ENCODE measurements at regions of chr16 and their contacts with region 1.

Region 1: DNA sequence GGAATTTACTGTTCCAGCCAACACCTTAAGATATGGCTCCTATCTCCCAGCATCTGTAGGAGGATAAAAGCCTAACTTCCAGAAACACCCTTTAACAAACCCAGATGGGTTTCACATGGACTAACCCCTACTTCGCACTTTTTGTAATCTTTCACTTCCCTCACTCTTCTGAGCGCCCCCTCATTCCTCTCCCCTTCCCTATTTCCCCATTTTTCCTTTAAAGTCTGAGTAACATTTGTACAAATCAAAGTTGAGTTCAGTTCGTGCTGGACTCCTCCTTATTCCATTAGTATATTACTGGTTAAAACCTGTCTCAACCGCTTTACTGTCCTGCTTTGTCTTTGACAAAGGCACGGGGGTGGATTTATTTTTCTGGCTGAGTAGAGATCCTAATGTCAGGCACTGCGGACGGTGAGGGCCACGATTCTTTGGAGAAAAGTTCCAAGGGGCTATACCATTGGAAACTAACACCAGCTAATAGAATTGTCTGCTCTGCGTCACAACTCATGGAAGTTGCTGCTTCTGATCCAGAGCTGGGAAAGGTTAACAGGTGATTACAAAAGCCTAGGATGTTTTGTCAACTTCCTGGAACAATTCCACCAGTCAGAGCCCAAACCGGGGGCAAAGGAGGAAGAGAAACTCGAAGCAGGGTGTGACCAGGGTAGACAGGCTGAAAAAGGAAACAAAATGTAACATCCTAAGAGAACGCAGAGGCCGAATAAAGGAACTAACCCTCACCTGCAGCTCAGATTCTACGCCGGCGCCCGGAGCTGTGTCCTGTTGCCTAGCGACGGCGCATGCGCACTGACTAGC is 12.5 kb downstream of the TAT start:
- DNase-seq: no peak
- H3K4me3 Mint-ChIP-seq: peak overlapping the region; percentile 79
- H3K27ac Mint-ChIP-seq: peak overlapping the region; percentile 92
- H3K4me1 Mint-ChIP-seq: peaks cover 14% of the 10 kb centered on the region
- H3K27me3 Mint-ChIP-seq: no peaks in the 10 kb centered on the region

Region 2: GRCh38 chr16:71493213-71493612 is 71.1 kb before region 1 on chr16:
- CTCF ChIA-PET with region 1: no interaction called
- POLR2A ChIA-PET with region 1: no interaction called
- intact Hi-C with region 1: no loop called
- DNase-seq: no peak
- H3K4me3 Mint-ChIP-seq: no peak overlapping the region
- H3K27ac Mint-ChIP-seq: no peak overlapping the region
- H3K4me1 Mint-ChIP-seq: no peaks in the 10 kb centered on the region
- H3K27me3 Mint-ChIP-seq: no peaks in the 10 kb centered on the region

Region 3: DNA sequence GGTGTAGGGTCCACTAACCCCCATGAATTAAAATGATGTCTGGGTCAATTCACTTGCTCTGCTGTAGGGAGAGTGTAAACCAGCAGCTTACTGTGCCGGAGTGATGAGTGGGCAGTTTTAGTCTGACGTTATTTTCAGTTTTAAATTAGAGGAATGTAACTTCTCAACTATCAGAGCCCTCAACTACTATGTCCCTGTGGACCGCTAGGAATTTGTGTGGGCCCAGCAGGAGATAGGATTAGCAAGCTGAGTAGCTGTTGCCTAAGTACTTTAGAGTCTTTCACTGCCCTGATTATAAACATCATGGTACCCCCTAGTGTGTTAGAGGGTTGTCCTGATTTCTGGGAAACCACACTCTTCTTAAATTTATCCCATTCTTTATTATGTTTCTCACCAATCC is 73.0 kb after region 1 on chr16:
- CTCF ChIA-PET with region 1: no interaction called
- POLR2A ChIA-PET with region 1: no interaction called
- intact Hi-C with region 1: no loop called
- DNase-seq: no peak
- H3K4me3 Mint-ChIP-seq: no peak overlapping the region
- H3K27ac Mint-ChIP-seq: no peak overlapping the region
- H3K4me1 Mint-ChIP-seq: no peaks in the 10 kb centered on the region
- H3K27me3 Mint-ChIP-seq: no peaks in the 10 kb centered on the region

Region 4: GRCh38 chr16:72008424-72009216 is 444.3 kb after region 1 on chr16 and contains the start of gene DHODH:
- CTCF ChIA-PET with region 1: no interaction called
- POLR2A ChIA-PET with region 1: no interaction called
- intact Hi-C with region 1: loop called (anchors 1 kb)
- DNase-seq: peak; percentile 99
- H3K4me3 Mint-ChIP-seq: peak within 1 kb of the TSS; percentile 91
- H3K27ac Mint-ChIP-seq: peak within 1 kb of the TSS; percentile 76
- H3K4me1 Mint-ChIP-seq: peaks cover 21% of the 10 kb centered on the region
- H3K27me3 Mint-ChIP-seq: no peaks in the 10 kb centered on the region
- total RNA-seq, gene DHODH: 16.9 to 18.6 TPM

Measured in activated CD4-positive, alpha-beta memory T cell treated with anti-CD3 and anti-CD28 coated beads for 36 hours (primary cell).